HCT116 (cell line): ENCODE measurements at regions of chr16 and their contacts with region 1.

Region 1: DNA sequence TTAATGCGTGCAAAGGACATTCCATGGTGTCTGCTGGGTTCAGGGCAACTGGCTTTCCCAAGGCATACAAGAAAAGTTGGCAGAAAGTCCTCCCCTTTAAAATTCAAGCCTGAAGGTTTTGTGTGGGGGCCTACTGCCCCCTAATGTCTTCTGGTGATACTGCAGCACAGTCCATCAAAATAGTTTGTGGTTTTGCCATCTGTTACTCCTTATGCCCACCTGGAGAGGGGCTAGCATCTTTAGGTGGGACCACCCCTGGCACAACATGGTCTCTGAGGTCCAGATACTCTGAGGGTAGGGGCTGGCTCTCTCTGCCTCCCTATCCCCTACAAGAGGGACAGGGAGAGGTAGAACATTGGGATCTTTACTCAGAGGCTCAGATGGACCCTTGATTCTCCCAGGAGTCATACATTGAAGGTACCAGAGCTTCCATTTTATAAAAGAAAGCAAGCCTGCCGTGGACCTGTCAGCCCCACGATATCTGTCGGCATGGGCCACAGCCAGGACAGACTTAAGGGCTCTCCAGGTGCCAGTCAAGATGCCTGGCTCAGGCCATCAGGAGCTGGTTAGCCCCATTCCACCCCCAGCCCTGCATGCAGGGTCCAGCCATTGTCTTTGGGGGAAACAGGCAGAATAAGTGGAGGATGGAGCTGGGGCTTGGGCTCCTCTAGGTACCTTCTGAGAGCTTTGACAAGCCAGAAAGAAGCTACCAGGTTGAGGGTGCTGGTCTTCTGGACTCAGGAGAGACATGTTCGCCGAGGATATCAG is 6.3 kb downstream of the ESRP2 start:
- DNase-seq: no peak
- ATAC-seq: peak; percentile 15
- H3K4me3 ChIP-seq: no peak overlapping the region
- H3K27ac ChIP-seq: no peak overlapping the region
- H3K4me1 ChIP-seq: peaks cover 16% of the 10 kb centered on the region in 2 experiments
- H3K27me3 ChIP-seq: no peaks in the 10 kb centered on the region
- CTCF ChIP-seq: peak in 2 of 3 experiments; percentile 92 to 93; a peak in 4 of 6 replicates
- POLR2A ChIP-seq: no peak
- RAD21 ChIP-seq: no peak

Region 2: DNA sequence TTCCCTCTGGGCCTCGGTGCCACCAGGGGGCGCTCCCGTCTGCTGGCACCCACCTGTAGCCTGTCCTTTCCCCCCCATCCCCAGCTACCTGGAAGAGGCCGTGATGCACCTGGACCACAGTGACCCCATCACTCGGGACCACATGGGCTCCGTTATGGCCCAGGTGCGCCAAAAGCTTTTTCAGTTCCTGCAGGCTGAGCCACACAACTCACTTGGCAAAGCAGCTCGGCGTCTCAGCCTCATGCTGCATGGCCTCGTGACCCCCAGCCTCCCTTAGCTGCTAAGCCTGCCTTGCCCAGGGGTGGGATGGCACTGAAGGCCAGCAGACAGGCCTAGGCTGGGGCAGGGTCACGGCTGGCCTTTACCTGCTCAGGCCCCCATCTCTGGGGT is 345.7 kb before region 1 on chr16:
- CTCF ChIA-PET with region 1: no interaction called
- POLR2A ChIA-PET with region 1: no interaction called
- RAD21 ChIA-PET with region 1: no interaction called
- intact Hi-C with region 1: loop called (anchors 10 kb)
- DNase-seq: peak; percentile 29
- ATAC-seq: peak; percentile 91
- H3K4me3 ChIP-seq: no peak overlapping the region
- H3K27ac ChIP-seq: no peak overlapping the region
- H3K4me1 ChIP-seq: no peaks in the 10 kb centered on the region
- H3K27me3 ChIP-seq: no peaks in the 10 kb centered on the region
- CTCF ChIP-seq: peak; percentile 85 to 92 (median 91)
- POLR2A ChIP-seq: no peak
- RAD21 ChIP-seq: peak; percentile 76

Region 3: DNA sequence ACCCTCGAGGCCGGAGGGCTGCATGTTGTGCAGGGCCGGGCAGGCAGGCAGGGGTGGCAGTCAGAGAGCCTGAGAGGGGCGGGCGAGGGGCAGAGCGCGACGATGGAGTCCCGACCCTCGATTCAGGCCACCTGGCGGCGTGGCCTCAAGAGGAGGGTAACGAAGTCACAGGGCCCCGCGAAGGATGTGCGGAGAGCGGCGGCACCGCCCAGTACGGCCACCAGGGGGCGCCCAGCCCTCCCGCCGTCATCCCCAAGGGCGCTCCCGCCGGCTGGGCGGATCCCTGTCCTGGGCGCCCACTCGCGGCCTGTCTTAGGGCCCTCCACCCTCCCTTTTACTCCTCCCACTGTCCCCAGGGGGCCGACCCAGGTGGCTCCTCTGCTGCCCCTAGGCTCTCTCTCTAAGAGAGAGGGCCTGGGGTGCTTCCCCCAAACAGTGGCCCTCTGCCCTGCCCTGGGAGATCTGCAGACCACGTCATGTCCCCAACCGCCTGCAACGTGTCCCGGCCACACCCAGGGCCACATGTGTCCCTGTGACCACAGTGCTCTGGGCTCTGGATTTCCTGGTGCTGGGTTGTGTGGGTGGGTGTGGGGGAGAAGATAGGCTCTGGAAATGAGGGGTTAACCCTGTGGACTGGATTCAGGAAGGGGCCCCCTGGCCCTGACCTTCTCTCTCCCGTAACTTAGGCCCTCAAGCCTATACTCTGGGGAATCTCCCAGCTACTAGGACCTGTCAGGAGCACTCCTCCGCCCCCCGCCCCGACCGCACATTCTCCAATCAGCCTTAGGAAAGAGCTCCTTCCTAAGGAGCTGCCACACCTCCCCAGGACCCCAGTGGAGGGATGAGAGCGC is 236.2 kb before region 1 on chr16:
- CTCF ChIA-PET with region 1: no interaction called
- POLR2A ChIA-PET with region 1: no interaction called
- RAD21 ChIA-PET with region 1: no interaction called
- intact Hi-C with region 1: loop called (anchors 1 kb)
- DNase-seq: peak; percentile 63
- ATAC-seq: peak; percentile 97
- H3K4me3 ChIP-seq: peak overlapping the region in 1 of 2 experiments; percentile 39; a peak in 2 of 4 replicates
- H3K27ac ChIP-seq: peak overlapping the region; percentile 48; the same call in 1 of the 2 replicates
- H3K4me1 ChIP-seq: peaks cover 5 to 20% of the 10 kb centered on the region in 2 experiments; a peak in 3 of 4 replicates
- H3K27me3 ChIP-seq: no peaks in the 10 kb centered on the region
- CTCF ChIP-seq: peak; percentile 86 to 96 (median 96)
- POLR2A ChIP-seq: no peak
- RAD21 ChIP-seq: peak; percentile 78

Region 4: DNA sequence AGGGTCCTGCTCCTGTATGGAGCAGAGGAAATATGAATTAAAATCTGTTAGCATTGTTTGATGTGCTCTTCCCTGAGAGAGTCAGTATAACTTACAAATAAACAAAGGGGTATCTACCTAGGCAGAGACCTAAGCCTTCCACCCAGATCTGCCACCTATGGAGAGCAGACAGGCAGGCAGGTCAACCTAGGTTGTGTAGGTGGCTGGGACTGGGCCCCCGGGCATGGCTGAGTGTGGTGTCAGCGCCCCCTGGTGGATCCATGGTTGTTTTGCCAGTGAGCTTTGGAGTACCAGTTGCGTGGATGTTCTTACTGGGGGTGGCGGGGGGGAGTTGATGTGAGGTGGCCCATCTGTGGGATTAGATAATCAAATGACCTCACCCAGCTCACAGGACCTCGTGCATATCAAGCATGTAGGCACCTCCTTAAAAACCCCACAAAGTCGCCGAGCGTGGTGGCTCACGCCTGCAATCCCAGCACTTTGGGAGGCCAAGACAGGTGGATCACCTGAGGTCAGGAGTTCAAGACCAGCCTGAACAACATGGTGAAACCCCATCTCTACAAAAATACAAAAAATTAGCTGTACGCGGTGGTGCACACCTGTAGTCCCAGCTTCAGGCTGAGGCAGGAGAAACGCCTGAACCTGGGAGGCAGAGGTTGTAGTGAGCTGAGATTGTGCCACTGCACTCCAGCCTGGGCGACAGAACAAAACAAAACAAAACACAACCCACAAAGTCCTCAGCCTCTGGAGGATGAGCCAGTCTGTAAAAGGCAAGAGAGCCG is 188.9 kb before region 1 on chr16:
- CTCF ChIA-PET with region 1: no interaction called
- POLR2A ChIA-PET with region 1: no interaction called
- RAD21 ChIA-PET with region 1: interaction called in 1 of 2 experiments, 3 read pairs
- intact Hi-C with region 1: loop called (anchors 1 kb)
- DNase-seq: peak; percentile 63
- ATAC-seq: peak; percentile 99
- H3K4me3 ChIP-seq: no peak overlapping the region
- H3K27ac ChIP-seq: no peak overlapping the region
- H3K4me1 ChIP-seq: peaks cover 4 to 5% of the 10 kb centered on the region in 2 experiments; a peak in 1 of 4 replicates
- H3K27me3 ChIP-seq: no peaks in the 10 kb centered on the region
- CTCF ChIP-seq: peak; percentile 90 to 96 (median 93)
- POLR2A ChIP-seq: no peak
- RAD21 ChIP-seq: peak; percentile 95

Region 5: DNA sequence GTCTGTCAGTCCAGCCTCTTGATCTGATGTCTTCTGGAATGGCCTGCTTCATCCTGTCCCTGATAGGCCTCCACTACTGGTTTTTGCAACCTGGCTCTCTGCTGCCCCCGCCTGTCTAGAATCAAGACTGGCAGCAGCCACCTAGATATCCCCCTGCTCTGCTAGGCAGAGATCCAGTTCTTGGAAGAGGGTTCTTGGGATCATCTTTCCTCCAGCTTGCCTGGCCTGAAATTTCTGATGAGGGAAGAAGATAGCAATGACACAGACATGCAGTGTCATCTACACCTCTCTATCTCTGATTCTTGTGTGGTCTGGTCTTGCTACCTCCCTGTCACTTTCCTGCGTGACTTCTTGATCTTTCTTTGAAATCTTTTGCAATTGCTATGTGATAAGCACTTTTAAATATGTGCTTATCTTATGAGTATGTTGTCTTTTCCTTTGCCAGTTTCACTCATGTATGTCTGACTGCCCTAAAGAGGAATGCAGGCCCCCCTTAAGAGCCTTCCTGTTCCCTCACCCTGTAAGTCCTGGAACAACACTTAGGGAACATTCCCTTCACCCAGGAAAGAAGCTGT is 164.7 kb before region 1 on chr16:
- CTCF ChIA-PET with region 1: no interaction called
- POLR2A ChIA-PET with region 1: no interaction called
- RAD21 ChIA-PET with region 1: no interaction called
- intact Hi-C with region 1: loop called (anchors 2 kb)
- DNase-seq: peak; percentile 28
- ATAC-seq: peak; percentile 98
- H3K4me3 ChIP-seq: no peak overlapping the region
- H3K27ac ChIP-seq: no peak overlapping the region
- H3K4me1 ChIP-seq: no peaks in the 10 kb centered on the region
- H3K27me3 ChIP-seq: no peaks in the 10 kb centered on the region
- CTCF ChIP-seq: peak; percentile 77 to 93 (median 85)
- POLR2A ChIP-seq: no peak
- RAD21 ChIP-seq: peak; percentile 77

Region 6: DNA sequence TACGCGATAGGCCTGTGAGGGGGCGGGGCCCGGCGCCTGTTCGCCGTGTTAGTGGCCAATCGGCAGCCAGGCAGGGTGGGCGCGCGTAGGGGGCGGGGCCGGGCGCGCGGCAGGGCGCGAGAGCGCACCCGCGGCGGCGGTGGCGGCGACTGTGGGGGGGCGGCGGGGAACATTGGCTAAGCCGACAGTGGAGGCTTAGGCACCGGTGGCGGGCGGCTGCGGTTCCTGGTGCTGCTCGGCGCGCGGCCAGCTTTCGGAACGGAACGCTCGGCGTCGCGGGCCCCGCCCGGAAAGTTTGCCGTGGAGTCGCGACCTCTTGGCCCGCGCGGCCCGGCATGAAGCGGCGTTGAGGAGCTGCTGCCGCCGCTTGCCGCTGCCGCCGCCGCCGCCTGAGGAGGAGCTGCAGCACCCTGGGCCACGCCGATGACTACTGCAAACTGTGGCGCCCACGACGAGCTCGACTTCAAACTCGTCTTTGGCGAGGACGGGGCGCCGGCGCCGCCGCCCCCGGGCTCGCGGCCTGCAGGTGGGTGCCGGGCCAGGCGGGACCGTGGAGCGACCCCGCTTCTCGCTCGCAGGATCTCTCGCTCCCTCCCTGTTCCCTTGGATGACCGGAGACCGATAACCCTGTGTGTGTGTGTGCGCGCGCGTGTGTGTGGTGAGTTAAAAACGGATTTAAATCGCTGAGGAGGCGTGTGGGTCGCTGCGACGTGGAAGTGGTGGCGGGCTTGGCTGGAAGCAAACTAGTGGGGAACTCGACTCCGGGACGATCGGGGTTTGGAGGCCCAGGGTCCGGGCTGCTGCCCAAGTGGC is 144.2 kb before region 1 on chr16 and contains the start of gene NFATC3:
- CTCF ChIA-PET with region 1: interaction called, 4 read pairs
- POLR2A ChIA-PET with region 1: no interaction called
- RAD21 ChIA-PET with region 1: no interaction called
- intact Hi-C with region 1: loop called (anchors 2 kb)
- DNase-seq: peak; percentile 86
- ATAC-seq: peak; percentile 93
- H3K4me3 ChIP-seq: peak within 1 kb of the TSS; percentile 92
- H3K27ac ChIP-seq: peak within 1 kb of the TSS; percentile 94
- H3K4me1 ChIP-seq: peaks cover 7 to 11% of the 10 kb centered on the region in 2 experiments; a peak in 2 of 4 replicates
- H3K27me3 ChIP-seq: no peaks in the 10 kb centered on the region
- CTCF ChIP-seq: no peak
- POLR2A ChIP-seq: no peak
- RAD21 ChIP-seq: no peak
- total RNA-seq, gene NFATC3: 25.6 TPM

Region 7: GRCh38 chr16:68093816-68094613 is 135.6 kb before region 1 on chr16:
- CTCF ChIA-PET with region 1: interaction called, 12 read pairs
- POLR2A ChIA-PET with region 1: no interaction called
- RAD21 ChIA-PET with region 1: interaction called in 1 of 2 experiments, 4 read pairs
- intact Hi-C with region 1: loop called (anchors 1 kb)
- DNase-seq: no peak
- ATAC-seq: peak; percentile 85
- H3K4me3 ChIP-seq: no peak overlapping the region
- H3K27ac ChIP-seq: no peak overlapping the region
- H3K4me1 ChIP-seq: peaks cover 13 to 23% of the 10 kb centered on the region in 2 experiments; a peak in 3 of 4 replicates
- H3K27me3 ChIP-seq: no peaks in the 10 kb centered on the region
- CTCF ChIP-seq: peak; percentile 46 to 61 (median 48); a peak in 5 of 6 replicates
- POLR2A ChIP-seq: no peak
- RAD21 ChIP-seq: peak; percentile 72

Region 8: DNA sequence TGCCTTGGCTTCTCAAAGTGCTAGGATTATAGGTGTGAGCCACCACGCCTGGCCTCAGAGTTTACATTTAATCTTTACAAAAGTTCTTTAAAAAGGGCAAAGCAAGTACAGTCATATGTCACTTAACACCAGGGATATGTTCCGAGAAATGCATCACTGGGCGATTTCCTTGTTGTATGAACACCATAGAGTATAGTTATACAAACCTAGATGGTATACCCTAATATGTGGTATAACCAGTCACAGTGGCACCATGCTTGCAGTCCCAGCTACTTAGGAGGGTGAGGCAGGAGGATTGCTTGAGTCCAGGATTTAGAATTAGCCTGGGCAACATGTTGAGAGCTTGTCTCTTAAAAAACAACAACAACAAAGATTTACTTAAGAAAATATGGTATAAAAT is 93.1 kb before region 1 on chr16:
- CTCF ChIA-PET with region 1: no interaction called
- POLR2A ChIA-PET with region 1: no interaction called
- RAD21 ChIA-PET with region 1: no interaction called
- intact Hi-C with region 1: no loop called
- DNase-seq: no peak
- ATAC-seq: no peak
- H3K4me3 ChIP-seq: no peak overlapping the region
- H3K27ac ChIP-seq: no peak overlapping the region
- H3K4me1 ChIP-seq: peaks cover 10 to 17% of the 10 kb centered on the region in 2 experiments
- H3K27me3 ChIP-seq: no peaks in the 10 kb centered on the region
- CTCF ChIP-seq: no peak
- POLR2A ChIP-seq: no peak
- RAD21 ChIP-seq: no peak

Region 9: DNA sequence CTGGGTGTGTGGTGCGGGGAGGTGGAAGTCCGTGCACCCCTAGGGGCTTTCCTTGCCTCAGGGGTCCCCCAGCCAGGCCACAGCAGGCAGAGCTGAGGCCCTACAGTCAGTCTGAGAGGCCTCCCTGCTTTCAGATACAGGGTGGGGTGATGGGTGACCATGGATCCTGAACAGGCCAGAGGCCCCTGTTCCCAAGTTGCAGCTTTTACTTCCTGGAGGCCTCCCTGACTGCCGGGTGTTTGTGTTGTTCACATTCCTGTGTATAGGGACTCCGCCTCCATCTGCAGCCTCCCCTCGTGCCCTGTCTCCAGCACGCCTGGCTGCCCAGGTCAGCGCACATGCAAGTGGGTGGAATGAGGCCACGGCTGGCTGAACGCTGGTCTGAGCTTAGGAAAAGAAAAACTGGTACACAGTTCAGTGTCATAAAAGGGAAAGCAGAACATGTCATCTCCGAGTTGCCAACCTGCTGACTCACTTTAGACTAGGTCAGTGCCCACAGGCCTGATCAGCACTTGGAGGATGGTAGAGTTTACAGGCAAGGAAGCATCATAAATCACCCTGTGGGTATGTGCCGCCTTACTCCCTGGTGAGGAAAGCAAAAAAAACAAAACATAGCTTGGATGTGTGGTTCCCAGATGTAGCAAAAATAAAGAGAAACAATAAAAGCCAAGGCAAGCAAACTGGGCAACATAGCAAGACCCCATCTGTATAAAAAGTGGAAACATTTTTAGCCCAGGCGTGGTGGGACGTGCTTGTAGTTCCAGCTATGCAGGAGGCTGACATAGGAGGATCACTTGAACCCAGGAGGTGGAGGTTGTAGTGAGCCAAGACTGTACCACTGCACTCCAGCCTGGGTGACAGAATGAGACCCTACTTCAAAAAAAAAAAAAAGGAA is 28.5 kb after region 1 on chr16:
- CTCF ChIA-PET with region 1: no interaction called
- POLR2A ChIA-PET with region 1: no interaction called
- RAD21 ChIA-PET with region 1: no interaction called
- intact Hi-C with region 1: no loop called
- DNase-seq: no peak
- ATAC-seq: no peak
- H3K4me3 ChIP-seq: no peak overlapping the region
- H3K27ac ChIP-seq: peak overlapping the region; percentile 1; the same call in 1 of the 2 replicates
- H3K4me1 ChIP-seq: peaks cover 1 to 12% of the 10 kb centered on the region in 2 experiments; a peak in 3 of 4 replicates
- H3K27me3 ChIP-seq: no peaks in the 10 kb centered on the region
- CTCF ChIP-seq: no peak
- POLR2A ChIP-seq: no peak
- RAD21 ChIP-seq: no peak